ENCODE measurements at regions of chr13 and their contacts with region 1.

Region 1: DNA sequence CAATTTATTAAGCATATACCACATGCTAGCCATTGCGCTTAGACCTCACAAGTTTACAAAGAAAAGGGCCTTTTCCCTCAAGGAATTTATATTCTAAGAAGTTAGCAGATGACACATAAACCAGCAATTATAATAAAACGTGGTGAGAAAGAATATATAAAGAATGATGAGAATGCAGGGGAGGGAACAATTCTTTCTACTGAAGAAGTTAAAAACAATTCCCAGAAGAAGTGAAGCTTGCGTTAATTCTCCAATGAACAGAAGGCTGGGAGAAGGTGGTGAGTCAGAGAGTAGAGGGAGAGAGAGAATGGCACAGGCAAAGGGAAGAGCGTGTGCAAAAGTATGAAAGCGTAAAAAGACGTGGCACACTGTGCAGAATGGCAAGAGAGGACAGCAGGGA is 69.5 kb upstream of the ZDHHC20 start:
- DNase-seq: no peak
- H3K4me3 ChIP-seq: no peak overlapping the region
- H3K4me3 Mint-ChIP-seq: no peak overlapping the region
- H3K27ac ChIP-seq: no peak overlapping the region
- H3K27ac Mint-ChIP-seq: no peak overlapping the region
- H3K4me1 ChIP-seq: peaks cover 13% of the 10 kb centered on the region
- H3K4me1 Mint-ChIP-seq: peaks cover 10 to 17% (median 17%) of the 10 kb centered on the region in 4 donors
- H3K27me3 ChIP-seq: no peaks in the 10 kb centered on the region
- H3K27me3 Mint-ChIP-seq: no peaks in the 10 kb centered on the region

Region 2: GRCh38 chr13:21541980-21542379 is 13.4 kb after region 1 on chr13:
- CTCF ChIA-PET with region 1: no interaction called
- POLR2A ChIA-PET with region 1: no interaction called
- intact Hi-C with region 1: loop called (anchors 1 kb)
- DNase-seq: no peak
- H3K4me3 ChIP-seq: no peak overlapping the region
- H3K4me3 Mint-ChIP-seq: no peak overlapping the region
- H3K27ac ChIP-seq: no peak overlapping the region
- H3K27ac Mint-ChIP-seq: no peak overlapping the region
- H3K4me1 ChIP-seq: no peaks in the 10 kb centered on the region
- H3K4me1 Mint-ChIP-seq: peaks cover 24 to 40% (median 33%) of the 10 kb centered on the region in 4 donors
- H3K27me3 ChIP-seq: no peaks in the 10 kb centered on the region
- H3K27me3 Mint-ChIP-seq: no peaks in the 10 kb centered on the region

Measured in CD4-positive, alpha-beta memory T cell (primary cell).